ENCODE measurements at regions of chr2 and their contacts with region 1.

Region 1: DNA sequence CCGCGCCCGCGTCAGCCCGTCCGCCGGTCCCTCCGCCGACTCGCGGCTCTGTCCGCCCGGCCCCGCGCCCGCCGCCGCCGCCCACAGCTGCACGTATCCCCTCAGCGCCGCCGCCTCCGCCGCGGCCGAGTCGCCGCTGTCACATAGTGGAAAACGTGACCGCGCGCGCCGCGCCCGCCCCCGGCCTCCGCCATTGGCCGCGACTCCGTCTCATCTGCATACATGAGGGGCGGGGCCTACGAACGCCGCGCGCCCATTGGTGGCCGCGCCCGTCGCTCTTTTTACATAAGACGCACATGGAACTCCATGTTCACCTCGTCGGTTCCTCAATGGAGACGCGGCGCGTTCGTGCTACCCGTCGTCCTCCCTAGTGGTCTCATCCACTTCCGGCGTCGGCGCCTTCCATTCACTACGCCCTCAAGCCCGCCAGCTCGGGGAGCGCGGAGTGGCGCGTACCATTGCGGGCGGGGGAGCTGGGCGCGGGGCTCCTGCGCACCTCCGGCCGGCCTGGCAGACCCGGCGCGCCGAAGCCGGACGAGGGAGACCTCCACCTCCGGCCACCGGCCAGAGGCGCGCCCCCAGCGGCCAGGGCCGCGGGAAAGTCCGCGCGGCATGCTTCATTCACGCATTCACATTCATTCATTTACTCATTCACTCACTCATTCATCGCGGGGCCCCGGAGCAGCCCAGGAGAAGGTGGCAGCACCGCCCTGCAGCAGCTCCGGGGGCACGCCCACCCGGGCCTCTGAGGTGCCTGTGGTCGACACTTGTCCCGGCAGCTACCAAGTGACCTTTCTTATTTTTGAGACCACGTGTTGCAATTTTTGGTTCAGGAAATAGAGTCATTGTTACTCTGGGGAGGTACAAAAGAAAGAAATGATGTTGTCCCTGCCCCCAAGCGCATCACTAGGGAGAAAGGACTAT is 502 bp upstream of the PER2 start:
- DNase-seq: peak; percentile 99
- ATAC-seq: peak; percentile 77
- H3K4me3 ChIP-seq: peak overlapping the region; percentile 75 to 99 (median 87)
- H3K27ac ChIP-seq: peak overlapping the region; percentile 99
- H3K4me1 ChIP-seq: peaks cover 63% of the 10 kb centered on the region
- H3K27me3 ChIP-seq: no peaks in the 10 kb centered on the region; a peak in 1 of 5 replicates
- CTCF ChIP-seq: peak; percentile 46
- EP300 ChIP-seq: no peak
- POLR2A ChIP-seq: peak in 1 of 2 experiments; percentile 83; a peak in 2 of 4 replicates
- RAD21 ChIP-seq: peak; percentile 79

Region 2: GRCh38 chr2:238239872-238240751 is 48.8 kb before region 1 on chr2 and contains the start of gene HES6:
- CTCF ChIA-PET with region 1: no interaction called
- POLR2A ChIA-PET with region 1: interaction called, 11 read pairs
- in situ Hi-C with region 1: no loop called
- intact Hi-C with region 1: no loop called
- DNase-seq: peak; percentile 82
- ATAC-seq: peak; percentile 83
- H3K4me3 ChIP-seq: peak within 1 kb of the TSS; percentile 61 to 85 (median 74)
- H3K27ac ChIP-seq: peak within 1 kb of the TSS; percentile 54
- H3K4me1 ChIP-seq: peaks cover 57% of the 10 kb centered on the region
- H3K27me3 ChIP-seq: no peaks in the 10 kb centered on the region; a peak in 2 of 5 replicates
- CTCF ChIP-seq: no peak; the same call in 1 of the 2 replicates
- EP300 ChIP-seq: 0 out of 4 replicates have a peak, but pooled peaks of 1 of the 2 experiments have one; percentile 13
- POLR2A ChIP-seq: peak in 1 of 2 experiments; percentile 95; a peak in 2 of 4 replicates
- RAD21 ChIP-seq: peak; percentile 82
- total RNA-seq, gene HES6: 59.0 and 82.8 TPM in 2 replicates

Region 3: DNA sequence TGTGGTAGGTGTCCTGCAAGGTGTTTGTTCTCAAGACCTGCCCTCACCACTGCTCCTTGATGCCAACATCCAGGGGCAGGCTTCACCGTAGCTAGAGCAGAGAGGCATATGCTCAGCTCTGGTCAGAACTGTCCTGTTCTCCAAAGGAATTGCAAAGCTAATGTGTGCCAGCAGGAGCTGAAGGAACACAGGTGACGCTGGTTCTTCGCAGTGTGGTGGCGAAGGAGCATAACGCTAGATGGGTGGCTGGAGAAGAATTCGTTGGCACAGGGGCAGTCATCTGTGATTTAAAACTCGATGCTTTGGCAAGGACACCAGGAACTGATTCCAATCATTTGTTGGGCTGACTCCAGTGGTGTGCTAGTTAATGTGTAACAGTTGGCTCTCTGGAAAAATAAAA is 10.9 kb after region 1 on chr2:
- CTCF ChIA-PET with region 1: interaction called, 5 read pairs
- POLR2A ChIA-PET with region 1: interaction called, 18 read pairs
- in situ Hi-C with region 1: no loop called
- intact Hi-C with region 1: no loop called
- DNase-seq: no peak
- ATAC-seq: peak; percentile 38
- H3K4me3 ChIP-seq: peak overlapping the region; percentile 18 to 52 (median 36); a peak in 4 of 6 replicates
- H3K27ac ChIP-seq: no peak overlapping the region
- H3K4me1 ChIP-seq: peaks cover 54% of the 10 kb centered on the region
- H3K27me3 ChIP-seq: peaks cover 1 to 8% of the 10 kb centered on the region in 2 experiments; a peak in 2 of 5 replicates
- CTCF ChIP-seq: no peak
- EP300 ChIP-seq: no peak
- POLR2A ChIP-seq: no peak
- RAD21 ChIP-seq: no peak

Region 4: GRCh38 chr2:238305092-238305862 is 16.4 kb after region 1 on chr2:
- CTCF ChIA-PET with region 1: interaction called, 5 read pairs
- POLR2A ChIA-PET with region 1: interaction called, 15 read pairs
- in situ Hi-C with region 1: no loop called
- intact Hi-C with region 1: no loop called
- DNase-seq: peak; percentile 51
- ATAC-seq: peak; percentile 83
- H3K4me3 ChIP-seq: peak overlapping the region in 1 of 3 experiments; percentile 22; a peak in 1 of 6 replicates
- H3K27ac ChIP-seq: no peak overlapping the region
- H3K4me1 ChIP-seq: peaks cover 33% of the 10 kb centered on the region
- H3K27me3 ChIP-seq: peaks cover 1 to 8% of the 10 kb centered on the region in 2 experiments; a peak in 3 of 5 replicates
- CTCF ChIP-seq: peak; percentile 64
- EP300 ChIP-seq: no peak
- POLR2A ChIP-seq: no peak
- RAD21 ChIP-seq: peak; percentile 53

Region 5: DNA sequence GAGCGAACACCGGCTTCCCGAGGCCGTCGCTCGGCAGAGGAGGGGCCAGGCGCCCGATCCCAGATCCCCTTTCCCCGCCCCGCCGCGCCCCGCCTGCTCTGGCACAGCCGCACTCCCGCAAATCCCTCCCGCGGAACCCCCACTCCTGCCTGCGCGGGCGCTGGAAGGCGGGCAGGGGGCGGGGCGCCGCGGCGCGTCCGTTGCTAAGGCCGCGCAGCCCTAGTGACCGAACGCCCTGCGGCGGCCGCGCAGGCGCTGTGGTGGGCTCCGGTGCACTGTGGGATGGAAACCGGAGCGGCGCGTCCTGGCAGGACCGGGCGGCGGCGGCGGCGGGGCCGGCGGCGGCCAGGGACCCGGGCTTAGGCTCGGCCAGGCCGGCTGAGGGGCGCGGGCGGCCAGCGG is 31.3 kb after region 1 on chr2 and contains the start of gene TRAF3IP1:
- CTCF ChIA-PET with region 1: no interaction called
- POLR2A ChIA-PET with region 1: interaction called, 4 read pairs
- in situ Hi-C with region 1: no loop called
- intact Hi-C with region 1: loop called (anchors 5 kb)
- DNase-seq: peak; percentile 86
- ATAC-seq: peak; percentile 91
- H3K4me3 ChIP-seq: peak within 1 kb of the TSS; percentile 74 to 92 (median 88)
- H3K27ac ChIP-seq: peak within 1 kb of the TSS; percentile 33
- H3K4me1 ChIP-seq: peaks cover 24% of the 10 kb centered on the region
- H3K27me3 ChIP-seq: peaks cover 3 to 13% of the 10 kb centered on the region in 2 experiments; a peak in 3 of 5 replicates
- CTCF ChIP-seq: no peak
- EP300 ChIP-seq: no peak
- POLR2A ChIP-seq: no peak; a peak in 1 of 4 replicates
- RAD21 ChIP-seq: peak; percentile 14; the same call in 1 of the 2 replicates
- total RNA-seq, gene TRAF3IP1: 12.9 TPM in 2 replicates

Region 6: GRCh38 chr2:238449909-238450417 is 161.1 kb after region 1 on chr2:
- CTCF ChIA-PET with region 1: no interaction called
- POLR2A ChIA-PET with region 1: no interaction called
- in situ Hi-C with region 1: no loop called
- intact Hi-C with region 1: no loop called
- DNase-seq: peak; percentile 98
- ATAC-seq: peak; percentile 98
- H3K4me3 ChIP-seq: no peak overlapping the region; a peak in 1 of 6 replicates
- H3K27ac ChIP-seq: peak overlapping the region; percentile 89
- H3K4me1 ChIP-seq: peaks cover 39% of the 10 kb centered on the region
- H3K27me3 ChIP-seq: no peaks in the 10 kb centered on the region
- CTCF ChIP-seq: peak; percentile 58
- EP300 ChIP-seq: peak; percentile 82 to 83; a peak in 2 of 4 replicates
- POLR2A ChIP-seq: peak in 1 of 2 experiments; percentile 52; a peak in 2 of 4 replicates
- RAD21 ChIP-seq: peak; percentile 56; the same call in 1 of the 2 replicates

Region 7: GRCh38 chr2:239015218-239015900 is 726.4 kb after region 1 on chr2:
- CTCF ChIA-PET with region 1: no interaction called
- POLR2A ChIA-PET with region 1: no interaction called
- in situ Hi-C with region 1: no loop called
- intact Hi-C with region 1: no loop called
- DNase-seq: no peak
- ATAC-seq: no peak
- H3K4me3 ChIP-seq: no peak overlapping the region
- H3K27ac ChIP-seq: no peak overlapping the region
- H3K4me1 ChIP-seq: no peaks in the 10 kb centered on the region
- H3K27me3 ChIP-seq: peaks cover 14 to 77% of the 10 kb centered on the region in 2 experiments
- CTCF ChIP-seq: no peak
- EP300 ChIP-seq: no peak
- POLR2A ChIP-seq: no peak
- RAD21 ChIP-seq: no peak